CD8-positive, alpha-beta T cell (primary cell): ENCODE measurements at regions of chr2 and their contacts with region 1.

Region 1: DNA sequence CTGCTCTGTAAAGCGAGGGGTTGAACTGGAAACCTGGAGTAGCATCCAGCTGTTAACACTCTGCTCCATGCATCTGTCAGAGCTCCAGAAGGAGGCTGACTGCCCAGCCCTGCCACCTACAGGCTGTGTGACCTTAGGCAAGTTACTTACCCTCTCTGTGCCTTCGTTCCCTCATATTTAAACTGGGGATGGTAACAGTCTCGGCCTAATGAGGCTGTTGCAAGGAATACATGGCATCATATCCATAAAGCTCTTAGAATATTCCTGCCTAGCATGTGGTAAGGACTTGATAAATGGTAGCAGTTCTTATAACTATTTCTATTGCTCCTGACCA is 80.6 kb downstream of the LRRFIP1 start:
- DNase-seq: peak in 2 of 9 experiments; percentile 35 to 54
- ATAC-seq: no peak
- H3K4me3 ChIP-seq: no peak overlapping the region
- H3K4me3 Mint-ChIP-seq: no peak overlapping the region
- H3K27ac ChIP-seq: no peak overlapping the region
- H3K27ac Mint-ChIP-seq: peak overlapping the region; percentile 5
- H3K4me1 ChIP-seq: peaks cover 53% of the 10 kb centered on the region
- H3K4me1 Mint-ChIP-seq: peaks cover 63% of the 10 kb centered on the region
- H3K27me3 ChIP-seq: no peaks in the 10 kb centered on the region
- H3K27me3 Mint-ChIP-seq: no peaks in the 10 kb centered on the region
- CTCF ChIP-seq: no peak

Region 2: DNA sequence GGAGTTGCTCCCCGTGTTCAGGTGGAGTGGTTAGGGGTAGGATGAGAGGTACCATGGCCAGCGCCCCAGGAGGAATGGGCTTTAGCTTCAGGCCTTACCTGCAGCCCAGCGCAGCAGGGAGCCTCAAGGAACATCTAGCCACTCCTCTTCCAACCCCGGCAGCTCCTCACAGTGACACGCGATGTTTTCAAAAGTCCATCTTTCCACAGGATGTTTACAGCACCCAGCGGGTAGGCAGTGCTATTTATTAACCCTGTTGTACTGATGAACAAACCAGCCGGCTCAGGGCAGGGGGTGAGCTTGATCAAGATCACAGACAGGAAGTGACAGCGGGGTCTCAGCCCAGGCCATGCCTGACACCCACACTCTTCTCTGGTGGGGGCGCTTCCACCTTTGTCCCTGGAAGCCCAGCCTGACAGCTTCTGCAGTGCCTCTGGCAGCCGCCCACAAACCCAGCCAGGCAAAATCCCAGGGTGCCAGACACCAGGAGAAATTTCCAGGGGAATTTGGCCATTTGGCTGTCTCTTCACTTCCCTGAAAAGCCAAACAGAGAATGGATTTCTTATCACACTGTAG is 160.1 kb before region 1 on chr2:
- CTCF ChIA-PET with region 1: no interaction called
- POLR2A ChIA-PET with region 1: no interaction called
- intact Hi-C with region 1: no loop called
- DNase-seq: no peak
- ATAC-seq: no peak
- H3K4me3 ChIP-seq: no peak overlapping the region
- H3K4me3 Mint-ChIP-seq: no peak overlapping the region
- H3K27ac ChIP-seq: no peak overlapping the region
- H3K27ac Mint-ChIP-seq: no peak overlapping the region
- H3K4me1 ChIP-seq: no peaks in the 10 kb centered on the region
- H3K4me1 Mint-ChIP-seq: no peaks in the 10 kb centered on the region
- H3K27me3 ChIP-seq: no peaks in the 10 kb centered on the region
- H3K27me3 Mint-ChIP-seq: no peaks in the 10 kb centered on the region
- CTCF ChIP-seq: no peak

Region 3: DNA sequence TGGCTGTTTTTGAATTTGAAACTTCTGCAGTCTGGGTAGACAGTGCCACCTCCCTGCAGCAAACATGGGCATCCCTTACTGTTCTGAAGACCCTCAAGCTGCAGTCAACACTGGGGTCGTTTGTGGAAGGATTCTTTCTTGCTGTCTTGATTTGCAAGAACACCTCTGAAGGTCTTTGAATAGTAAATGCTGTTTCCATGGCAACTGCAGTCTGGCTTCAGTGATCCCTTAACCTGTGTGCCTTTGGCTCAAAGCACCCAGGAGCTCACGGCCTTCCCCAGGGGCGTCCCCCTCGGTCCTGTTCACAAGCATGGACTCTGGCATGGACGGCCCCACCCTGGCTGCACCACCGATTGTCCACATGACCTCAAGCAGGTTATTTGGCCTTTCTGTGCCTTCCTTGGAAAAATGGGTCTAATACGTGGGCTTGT is 42.3 kb before region 1 on chr2:
- CTCF ChIA-PET with region 1: interaction called, 328 read pairs
- POLR2A ChIA-PET with region 1: no interaction called
- intact Hi-C with region 1: loop called (anchors 2 to 5 kb)
- DNase-seq: no peak
- ATAC-seq: no peak
- H3K4me3 ChIP-seq: no peak overlapping the region
- H3K4me3 Mint-ChIP-seq: no peak overlapping the region
- H3K27ac ChIP-seq: no peak overlapping the region
- H3K27ac Mint-ChIP-seq: no peak overlapping the region
- H3K4me1 ChIP-seq: no peaks in the 10 kb centered on the region
- H3K4me1 Mint-ChIP-seq: peaks cover 6% of the 10 kb centered on the region
- H3K27me3 ChIP-seq: peaks cover 0 to 3% of the 10 kb centered on the region in 2 experiments
- H3K27me3 Mint-ChIP-seq: no peaks in the 10 kb centered on the region
- CTCF ChIP-seq: no peak

Region 4: DNA sequence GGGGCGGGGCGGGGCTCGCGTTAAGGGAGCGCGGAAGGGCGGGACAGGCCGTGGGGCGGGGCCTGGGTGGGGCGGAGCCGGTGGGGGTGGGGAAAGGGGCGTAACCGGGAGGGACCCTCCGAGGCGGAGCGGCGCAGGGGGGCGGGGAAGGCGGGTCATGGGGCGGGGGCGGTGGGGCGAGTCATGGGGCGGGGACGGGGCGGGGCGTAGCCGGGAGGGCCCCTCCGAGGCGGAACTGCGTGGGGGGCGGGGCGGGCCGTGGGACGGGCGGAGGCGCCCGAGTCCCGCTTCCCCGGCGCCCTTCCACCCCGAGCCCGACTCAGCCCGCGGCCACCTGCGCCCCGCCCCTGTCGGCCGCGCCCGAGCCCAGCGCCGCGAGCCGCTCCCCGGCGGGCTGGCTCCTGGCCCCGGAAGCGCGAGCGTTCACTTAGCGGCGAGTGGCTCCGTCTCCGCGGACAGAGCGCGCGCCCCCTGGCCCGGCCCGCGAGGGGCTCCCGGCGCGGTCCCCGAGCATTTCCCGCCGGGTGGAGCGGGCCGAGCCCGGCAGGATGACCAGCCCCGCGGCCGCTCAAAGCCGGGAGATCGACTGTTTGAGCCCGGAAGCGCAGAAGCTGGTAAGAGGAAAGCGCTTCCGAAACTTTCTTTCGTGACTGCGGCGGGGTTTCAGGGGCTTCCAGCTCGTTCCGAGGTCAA is 16.0 kb before region 1 on chr2:
- CTCF ChIA-PET with region 1: interaction called, 20 read pairs
- POLR2A ChIA-PET with region 1: interaction called, 11 read pairs
- intact Hi-C with region 1: loop called in 1 of 2 experiments (anchors 2 kb)
- DNase-seq: peak; percentile 91 to 97 (median 95)
- ATAC-seq: peak; percentile 58
- H3K4me3 ChIP-seq: peak overlapping the region; percentile 80 to 85
- H3K4me3 Mint-ChIP-seq: peak overlapping the region; percentile 81
- H3K27ac ChIP-seq: peak overlapping the region; percentile 81 to 90
- H3K27ac Mint-ChIP-seq: peak overlapping the region; percentile 89
- H3K4me1 ChIP-seq: peaks cover 75% of the 10 kb centered on the region
- H3K4me1 Mint-ChIP-seq: peaks cover 75% of the 10 kb centered on the region
- H3K27me3 ChIP-seq: no peaks in the 10 kb centered on the region
- H3K27me3 Mint-ChIP-seq: no peaks in the 10 kb centered on the region
- CTCF ChIP-seq: no peak